CD8-positive, alpha-beta T cell (primary cell): ENCODE measurements at regions of chr1 and their contacts with region 1.

Region 1: GRCh38 chr1:176691251-176692228 is 228.6 kb downstream of the PAPPA2 start:
- DNase-seq: peak in 2 of 9 experiments; percentile 10 to 29
- ATAC-seq: no peak
- H3K4me3 ChIP-seq: no peak overlapping the region
- H3K4me3 Mint-ChIP-seq: no peak overlapping the region
- H3K27ac ChIP-seq: no peak overlapping the region
- H3K27ac Mint-ChIP-seq: no peak overlapping the region
- H3K4me1 ChIP-seq: no peaks in the 10 kb centered on the region
- H3K4me1 Mint-ChIP-seq: no peaks in the 10 kb centered on the region
- H3K27me3 ChIP-seq: no peaks in the 10 kb centered on the region
- H3K27me3 Mint-ChIP-seq: no peaks in the 10 kb centered on the region
- CTCF ChIP-seq: peak; percentile 39

Region 2: GRCh38 chr1:175146529-175147213 is 1544.9 kb before region 1 on chr1:
- CTCF ChIA-PET with region 1: no interaction called
- POLR2A ChIA-PET with region 1: no interaction called
- intact Hi-C with region 1: loop called in 1 of 2 experiments (anchors 5 kb)
- DNase-seq: peak; percentile 48 to 75 (median 67)
- ATAC-seq: peak; percentile 87
- H3K4me3 ChIP-seq: no peak overlapping the region
- H3K4me3 Mint-ChIP-seq: no peak overlapping the region
- H3K27ac ChIP-seq: no peak overlapping the region
- H3K27ac Mint-ChIP-seq: no peak overlapping the region
- H3K4me1 ChIP-seq: peaks cover 2% of the 10 kb centered on the region
- H3K4me1 Mint-ChIP-seq: peaks cover 3% of the 10 kb centered on the region
- H3K27me3 ChIP-seq: peaks cover 0 to under 1% of the 10 kb centered on the region in 2 experiments
- H3K27me3 Mint-ChIP-seq: peaks cover 28% of the 10 kb centered on the region
- CTCF ChIP-seq: peak; percentile 88

Region 3: DNA sequence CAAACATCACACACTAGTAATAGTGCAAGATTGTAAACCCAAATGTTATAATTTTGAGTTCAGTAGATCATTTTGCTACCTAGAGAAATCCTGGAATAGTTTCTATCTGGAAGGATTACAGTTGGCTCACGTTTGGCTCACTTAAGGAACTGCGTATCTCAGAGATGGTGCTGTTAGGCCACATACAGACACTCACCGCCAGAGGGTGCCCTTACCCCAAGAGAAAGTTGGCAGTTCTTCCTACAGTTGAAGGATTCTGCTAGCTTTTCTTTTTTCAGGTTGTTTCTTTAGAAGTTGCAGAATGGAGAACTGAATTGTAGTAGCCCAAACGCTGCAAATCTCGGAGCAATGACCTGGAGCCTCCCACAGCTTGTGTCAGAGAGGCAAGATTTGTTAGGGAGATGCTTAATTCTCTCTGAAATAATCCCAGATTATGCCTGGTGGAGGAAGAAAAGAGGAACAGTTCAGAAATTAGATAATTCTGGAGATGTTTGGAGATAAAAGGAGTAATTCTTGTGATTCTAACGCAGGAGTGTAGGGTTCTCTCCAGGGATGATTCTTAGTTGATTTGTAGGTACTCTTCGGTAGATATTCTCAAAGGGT is 316.5 kb before region 1 on chr1:
- CTCF ChIA-PET with region 1: interaction called, 3 read pairs
- POLR2A ChIA-PET with region 1: no interaction called
- intact Hi-C with region 1: loop called in 1 of 2 experiments (anchors 5 kb)
- DNase-seq: peak in 8 of 9 experiments; percentile 19 to 55 (median 42)
- ATAC-seq: no peak
- H3K4me3 ChIP-seq: no peak overlapping the region
- H3K4me3 Mint-ChIP-seq: no peak overlapping the region
- H3K27ac ChIP-seq: no peak overlapping the region
- H3K27ac Mint-ChIP-seq: no peak overlapping the region
- H3K4me1 ChIP-seq: no peaks in the 10 kb centered on the region
- H3K4me1 Mint-ChIP-seq: no peaks in the 10 kb centered on the region
- H3K27me3 ChIP-seq: no peaks in the 10 kb centered on the region
- H3K27me3 Mint-ChIP-seq: peaks cover 11% of the 10 kb centered on the region
- CTCF ChIP-seq: peak; percentile 55